Activated CD4-positive, alpha-beta memory T cell treated with anti-CD3 and anti-CD28 coated beads for 36 hours (primary cell): ENCODE measurements at regions of chr2 and their contacts with region 1.

Region 1: DNA sequence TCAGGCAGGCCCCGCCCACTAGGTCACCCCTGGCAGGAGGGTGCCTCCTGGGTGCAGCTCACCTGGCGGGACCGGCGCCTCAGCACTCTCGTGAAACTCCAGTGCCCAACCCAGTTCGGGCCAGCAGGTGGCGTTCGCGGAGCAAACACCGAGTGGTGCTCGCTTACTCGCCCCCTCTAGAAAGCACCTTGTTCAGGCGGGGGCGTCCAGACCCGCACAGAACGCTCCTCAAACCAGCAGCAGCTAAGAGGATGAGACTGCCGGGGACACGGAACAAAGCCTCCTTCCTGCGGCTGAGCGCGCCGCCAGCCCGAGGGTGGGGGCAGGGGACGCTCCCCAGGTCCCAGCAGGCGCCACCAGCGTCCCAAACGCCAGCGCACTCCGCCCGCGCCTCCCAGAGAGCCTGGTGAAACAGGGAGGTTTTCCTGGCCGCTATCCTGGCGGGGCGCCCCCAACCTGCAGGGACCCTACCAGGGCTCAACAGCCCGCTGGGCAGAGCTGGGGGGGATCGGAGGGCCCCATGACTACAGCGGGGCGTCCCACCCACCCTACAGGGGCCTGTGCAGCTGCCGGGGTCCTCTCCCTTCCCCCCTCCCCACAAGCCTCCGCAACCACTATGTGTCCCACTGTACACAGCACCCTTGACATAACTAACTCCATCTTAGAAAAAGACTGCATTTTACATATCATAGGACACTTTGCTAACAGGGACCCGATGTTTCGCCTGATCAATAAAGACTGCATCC is 44.7 kb downstream of the MRPS5 start:
- DNase-seq: peak; percentile 95
- H3K4me3 Mint-ChIP-seq: peak overlapping the region; percentile 72
- H3K27ac Mint-ChIP-seq: peak overlapping the region; percentile 92
- H3K4me1 Mint-ChIP-seq: peaks cover 62% of the 10 kb centered on the region
- H3K27me3 Mint-ChIP-seq: peaks cover 1% of the 10 kb centered on the region

Region 2: DNA sequence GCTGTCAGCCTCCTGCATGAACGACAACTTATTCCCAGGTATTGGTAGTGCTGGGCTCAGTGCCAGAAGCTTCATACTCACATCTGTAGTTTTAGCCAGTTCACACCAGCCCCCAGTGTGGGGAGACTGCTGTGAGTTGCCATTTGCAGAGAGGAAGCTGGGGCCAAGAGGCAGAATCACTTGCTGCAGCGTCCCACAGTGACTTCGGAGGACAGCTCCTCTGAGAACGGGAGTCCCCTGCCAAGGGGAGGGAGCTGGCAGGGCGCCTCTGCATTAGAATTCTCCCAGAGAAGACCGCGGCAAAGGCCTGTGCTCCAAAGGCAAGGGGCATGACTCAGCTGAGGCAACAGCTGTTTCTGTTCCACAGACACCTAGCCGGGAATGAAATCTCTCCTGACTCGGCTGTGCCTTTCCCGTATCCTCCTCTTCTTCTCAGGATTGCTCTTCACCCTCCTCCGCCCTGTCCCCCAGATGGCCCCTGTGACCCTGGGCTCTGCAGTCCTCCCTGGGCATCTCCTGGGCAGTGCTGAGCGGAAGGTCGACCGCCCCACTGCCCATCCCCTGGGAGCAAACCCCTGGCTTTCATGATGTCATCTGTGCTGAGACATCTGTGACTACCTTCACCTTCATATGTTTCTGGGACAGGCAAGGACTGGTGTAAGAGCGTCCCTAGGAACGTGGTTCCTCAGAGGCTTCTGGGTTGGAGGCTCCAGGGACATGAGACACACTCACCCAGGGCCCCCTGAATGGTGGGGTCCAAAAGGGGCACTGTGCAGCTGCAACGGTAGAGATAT is 33.5 kb before region 1 on chr2:
- CTCF ChIA-PET with region 1: interaction called, 24 read pairs
- POLR2A ChIA-PET with region 1: interaction called, 4 read pairs
- intact Hi-C with region 1: loop called (anchors 2 kb)
- DNase-seq: peak; percentile 79
- H3K4me3 Mint-ChIP-seq: no peak overlapping the region
- H3K27ac Mint-ChIP-seq: peak overlapping the region; percentile 59
- H3K4me1 Mint-ChIP-seq: peaks cover 72% of the 10 kb centered on the region
- H3K27me3 Mint-ChIP-seq: no peaks in the 10 kb centered on the region

Region 3: GRCh38 chr2:95091885-95092555 is 15.1 kb after region 1 on chr2:
- CTCF ChIA-PET with region 1: interaction called, 10 read pairs
- POLR2A ChIA-PET with region 1: interaction called, 5 read pairs
- intact Hi-C with region 1: no loop called
- DNase-seq: no peak
- H3K4me3 Mint-ChIP-seq: no peak overlapping the region
- H3K27ac Mint-ChIP-seq: no peak overlapping the region
- H3K4me1 Mint-ChIP-seq: peaks cover 19% of the 10 kb centered on the region
- H3K27me3 Mint-ChIP-seq: no peaks in the 10 kb centered on the region

Region 4: DNA sequence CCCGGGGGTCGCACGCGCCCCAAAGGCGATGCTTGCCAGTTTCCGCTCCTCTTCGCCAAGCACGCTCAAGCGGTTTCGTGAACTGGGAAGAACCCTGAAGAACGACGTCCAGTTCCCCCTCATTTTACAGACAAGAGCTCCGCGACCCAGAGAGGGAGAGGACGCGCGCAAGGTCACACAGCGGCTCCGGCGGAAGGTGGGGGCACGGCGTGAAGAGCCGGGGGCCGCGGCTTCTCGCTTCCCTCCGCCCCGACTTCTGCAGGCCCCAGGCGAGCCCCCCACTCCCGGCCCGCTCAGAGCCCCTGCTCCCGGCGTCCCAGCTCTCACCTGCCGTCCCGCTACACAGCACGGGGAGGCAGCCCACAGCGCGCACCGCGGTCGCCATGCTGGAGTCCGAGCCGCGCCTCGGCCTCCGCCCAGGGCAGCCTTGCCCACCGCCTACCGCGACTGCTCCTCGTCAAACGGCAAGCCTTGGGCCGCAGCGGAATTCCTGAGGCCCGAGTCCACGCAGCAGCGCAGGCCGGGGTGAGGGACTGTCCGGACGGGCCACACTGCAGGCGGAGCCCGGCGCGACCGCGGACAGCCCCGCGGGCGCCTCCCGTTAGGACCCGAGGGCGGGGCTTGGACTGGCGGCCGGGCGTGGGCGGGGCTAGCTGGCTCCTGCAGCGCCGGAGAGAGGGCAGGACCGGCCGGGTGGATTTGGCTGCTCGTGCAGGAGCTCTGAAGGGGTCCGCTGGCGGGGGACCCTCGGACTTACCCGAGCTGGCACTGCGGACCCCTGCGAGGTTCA is 44.6 kb after region 1 on chr2 and contains the start of gene MRPS5:
- CTCF ChIA-PET with region 1: interaction called, 95 read pairs
- POLR2A ChIA-PET with region 1: interaction called, 4 read pairs
- intact Hi-C with region 1: loop called (anchors 1 kb)
- DNase-seq: peak; percentile 90
- H3K4me3 Mint-ChIP-seq: peak within 1 kb of the TSS; percentile 90
- H3K27ac Mint-ChIP-seq: peak within 1 kb of the TSS; percentile 91
- H3K4me1 Mint-ChIP-seq: peaks cover 43% of the 10 kb centered on the region
- H3K27me3 Mint-ChIP-seq: no peaks in the 10 kb centered on the region
- total RNA-seq, gene MRPS5: 79.3 to 82.3 TPM

Region 5: GRCh38 chr2:95165129-95166064 is 88.4 kb after region 1 on chr2 and contains the start of gene ZNF2:
- CTCF ChIA-PET with region 1: interaction called, 5 read pairs
- POLR2A ChIA-PET with region 1: interaction called, 5 read pairs
- intact Hi-C with region 1: loop called (anchors 1 kb)
- DNase-seq: peak; percentile 98
- H3K4me3 Mint-ChIP-seq: peak within 1 kb of the TSS; percentile 100
- H3K27ac Mint-ChIP-seq: peak within 1 kb of the TSS; percentile 93
- H3K4me1 Mint-ChIP-seq: peaks cover 34% of the 10 kb centered on the region
- H3K27me3 Mint-ChIP-seq: no peaks in the 10 kb centered on the region
- total RNA-seq, gene ZNF2: 3.9 to 4.4 TPM